Activated T-helper 2 cell treated with anti-CD3 and anti-CD28 coated beads, Interferon-gamma antibody, Interleukin-2, Interleukin-4, amounts not matched to agents 10 μg/mL and 5 μg/mL and 100 μg/mL, durations not matched to agents 14 hours and 24 hours and 36 hours (primary cell): ENCODE measurements at regions of chr7 and their contacts with region 1.

Region 1: DNA sequence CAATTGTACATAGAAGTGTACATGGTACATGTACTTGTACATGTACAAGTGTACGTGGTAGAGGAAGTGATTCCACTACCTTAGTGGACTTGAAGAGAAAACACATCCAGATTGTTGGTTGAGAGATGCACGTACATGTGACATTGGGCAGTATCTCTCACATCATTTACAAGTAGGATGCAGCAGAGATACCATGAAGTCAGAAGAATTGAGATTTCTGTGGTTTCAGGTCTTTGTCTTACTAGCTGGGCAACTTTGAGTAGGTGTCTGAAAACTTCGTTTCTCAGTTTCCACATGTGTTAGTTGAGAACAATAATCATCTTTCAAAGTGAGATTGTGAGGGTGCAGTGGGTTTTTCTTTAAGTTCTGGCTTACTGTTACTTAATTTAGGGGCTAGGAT is 21.5 kb downstream of the CLDN12 start:
- DNase-seq: no peak
- H3K4me3 Mint-ChIP-seq: peak overlapping the region; percentile 9
- H3K27ac Mint-ChIP-seq: peak overlapping the region; percentile 80
- H3K4me1 Mint-ChIP-seq: peaks cover 29% of the 10 kb centered on the region
- H3K27me3 Mint-ChIP-seq: peaks cover 5% of the 10 kb centered on the region

Region 2: GRCh38 chr7:89002981-89003956 is 1421.5 kb before region 1 on chr7:
- intact Hi-C with region 1: loop called (anchors 10 kb)
- DNase-seq: no peak
- H3K4me3 Mint-ChIP-seq: peak overlapping the region; percentile 69
- H3K27ac Mint-ChIP-seq: peak overlapping the region; percentile 82
- H3K4me1 Mint-ChIP-seq: peaks cover 16% of the 10 kb centered on the region
- H3K27me3 Mint-ChIP-seq: peaks cover 5% of the 10 kb centered on the region

Region 3: GRCh38 chr7:90155206-90155605 is 269.5 kb before region 1 on chr7:
- intact Hi-C with region 1: loop called (anchors 1 kb)
- DNase-seq: no peak
- H3K4me3 Mint-ChIP-seq: no peak overlapping the region
- H3K27ac Mint-ChIP-seq: no peak overlapping the region
- H3K4me1 Mint-ChIP-seq: peaks cover 4% of the 10 kb centered on the region
- H3K27me3 Mint-ChIP-seq: peaks cover 29% of the 10 kb centered on the region

Region 4: DNA sequence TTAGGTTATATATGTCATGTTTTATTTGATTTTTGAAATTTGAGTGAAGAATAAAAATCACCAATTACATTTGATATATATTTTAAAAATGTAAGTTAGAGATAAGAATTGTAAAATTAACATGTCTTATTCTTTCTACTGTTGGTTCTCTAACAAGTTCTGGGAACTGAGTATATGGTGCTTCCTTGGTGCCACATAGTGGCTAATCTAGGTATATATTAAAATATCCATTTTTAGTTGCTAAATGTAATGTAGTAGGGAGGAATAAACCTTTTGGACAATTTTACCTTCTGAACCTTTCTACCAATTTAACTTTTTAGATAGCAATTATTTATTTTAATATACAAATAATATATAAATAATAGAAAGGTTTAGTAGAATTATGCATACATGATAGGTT is 162.3 kb before region 1 on chr7:
- intact Hi-C with region 1: loop called (anchors 5 kb)
- DNase-seq: no peak
- H3K4me3 Mint-ChIP-seq: no peak overlapping the region
- H3K27ac Mint-ChIP-seq: no peak overlapping the region
- H3K4me1 Mint-ChIP-seq: no peaks in the 10 kb centered on the region
- H3K27me3 Mint-ChIP-seq: peaks cover 6% of the 10 kb centered on the region

Region 5: GRCh38 chr7:90346336-90347125 is 78.2 kb before region 1 on chr7 and contains the start of gene GTPBP10:
- intact Hi-C with region 1: loop called (anchors 1 kb)
- DNase-seq: peak; percentile 93
- H3K4me3 Mint-ChIP-seq: peak within 1 kb of the TSS; percentile 90
- H3K27ac Mint-ChIP-seq: peak within 1 kb of the TSS; percentile 95
- H3K4me1 Mint-ChIP-seq: peaks cover 31% of the 10 kb centered on the region
- H3K27me3 Mint-ChIP-seq: no peaks in the 10 kb centered on the region
- total RNA-seq, gene GTPBP10: 29.3 and 32.0 TPM in 2 replicates

Region 6: DNA sequence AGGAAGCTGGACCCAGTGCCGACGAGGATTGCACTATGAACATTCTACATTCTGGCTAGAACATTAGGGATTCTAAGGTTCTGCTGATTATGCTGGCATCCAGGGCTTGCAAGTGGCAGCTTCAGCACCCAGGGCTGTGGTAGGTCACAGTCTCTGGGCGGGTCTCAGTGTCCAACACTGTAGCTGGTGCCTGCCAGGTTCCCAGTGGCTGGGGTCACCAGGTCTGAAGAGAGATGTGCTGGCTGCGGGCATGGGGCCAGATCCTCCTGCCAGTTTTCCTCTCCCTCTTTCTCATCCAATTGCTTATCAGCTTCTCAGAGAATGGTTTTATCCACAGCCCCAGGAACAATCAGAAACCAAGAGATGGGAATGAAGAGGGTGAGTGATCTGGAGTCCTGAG is 44.8 kb after region 1 on chr7 and contains the start of gene PTTG1IP2:
- intact Hi-C with region 1: no loop called
- DNase-seq: no peak
- H3K4me3 Mint-ChIP-seq: no peak within 1 kb of the TSS
- H3K27ac Mint-ChIP-seq: no peak within 1 kb of the TSS
- H3K4me1 Mint-ChIP-seq: no peaks in the 10 kb centered on the region
- H3K27me3 Mint-ChIP-seq: no peaks in the 10 kb centered on the region
- total RNA-seq, gene PTTG1IP2: not detected in 2 replicates

Region 7: DNA sequence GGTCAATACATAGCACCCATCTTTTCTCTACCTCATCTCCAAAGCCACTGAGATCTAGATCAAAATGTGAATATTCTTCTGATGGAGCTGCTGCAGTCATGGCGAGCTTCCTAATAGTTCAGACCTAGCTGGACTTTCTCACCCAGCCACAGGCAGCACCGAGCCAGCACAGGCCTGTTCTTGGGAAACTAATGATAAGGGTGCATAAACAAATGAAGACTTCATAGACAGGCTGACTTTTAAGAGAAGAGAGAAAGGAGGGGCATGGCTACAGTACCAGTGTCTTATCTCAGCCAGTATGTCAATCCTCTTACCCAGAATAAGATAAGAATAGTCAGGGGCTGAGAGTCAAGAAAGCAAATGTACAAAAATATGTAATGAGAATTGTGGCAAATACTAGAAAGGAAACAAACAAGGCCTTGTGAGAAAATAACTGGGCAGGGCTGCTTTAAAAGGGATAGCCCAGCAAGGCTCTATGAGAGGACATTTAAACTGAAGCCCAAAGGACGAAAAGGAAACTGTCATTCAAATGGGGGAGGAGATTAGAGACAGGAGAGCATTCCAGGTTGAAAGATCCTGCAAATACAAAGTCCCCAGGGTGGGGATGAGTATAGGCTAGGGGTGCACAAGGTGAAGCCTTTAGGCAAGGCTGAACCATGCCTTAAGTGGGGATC is 149.6 kb after region 1 on chr7:
- intact Hi-C with region 1: no loop called
- DNase-seq: no peak
- H3K4me3 Mint-ChIP-seq: no peak overlapping the region
- H3K27ac Mint-ChIP-seq: no peak overlapping the region
- H3K4me1 Mint-ChIP-seq: no peaks in the 10 kb centered on the region
- H3K27me3 Mint-ChIP-seq: no peaks in the 10 kb centered on the region

Region 8: GRCh38 chr7:90613088-90613498 is 188.4 kb after region 1 on chr7:
- intact Hi-C with region 1: loop called (anchors 10 kb)
- DNase-seq: no peak
- H3K4me3 Mint-ChIP-seq: no peak overlapping the region
- H3K27ac Mint-ChIP-seq: peak overlapping the region; percentile 87
- H3K4me1 Mint-ChIP-seq: peaks cover 11% of the 10 kb centered on the region
- H3K27me3 Mint-ChIP-seq: no peaks in the 10 kb centered on the region